CD8-positive, alpha-beta T cell (primary cell): ENCODE measurements at regions of chr17 and their contacts with region 1.

Region 1: GRCh38 chr17:75400326-75400939 is 5.0 kb downstream of the GRB2 start:
- DNase-seq: no peak
- ATAC-seq: no peak
- H3K4me3 ChIP-seq: no peak overlapping the region
- H3K4me3 Mint-ChIP-seq: no peak overlapping the region
- H3K27ac ChIP-seq: no peak overlapping the region
- H3K27ac Mint-ChIP-seq: no peak overlapping the region
- H3K4me1 ChIP-seq: peaks cover 48% of the 10 kb centered on the region
- H3K4me1 Mint-ChIP-seq: peaks cover 61% of the 10 kb centered on the region
- H3K27me3 ChIP-seq: no peaks in the 10 kb centered on the region
- H3K27me3 Mint-ChIP-seq: no peaks in the 10 kb centered on the region
- CTCF ChIP-seq: no peak

Region 2: GRCh38 chr17:75209061-75209460 is 191.4 kb before region 1 on chr17:
- CTCF ChIA-PET with region 1: no interaction called
- POLR2A ChIA-PET with region 1: no interaction called
- intact Hi-C with region 1: no loop called
- DNase-seq: no peak
- ATAC-seq: no peak
- H3K4me3 ChIP-seq: no peak overlapping the region
- H3K4me3 Mint-ChIP-seq: no peak overlapping the region
- H3K27ac ChIP-seq: no peak overlapping the region
- H3K27ac Mint-ChIP-seq: no peak overlapping the region
- H3K4me1 ChIP-seq: peaks cover 18% of the 10 kb centered on the region
- H3K4me1 Mint-ChIP-seq: peaks cover 19% of the 10 kb centered on the region
- H3K27me3 ChIP-seq: no peaks in the 10 kb centered on the region
- H3K27me3 Mint-ChIP-seq: no peaks in the 10 kb centered on the region
- CTCF ChIP-seq: no peak

Region 3: DNA sequence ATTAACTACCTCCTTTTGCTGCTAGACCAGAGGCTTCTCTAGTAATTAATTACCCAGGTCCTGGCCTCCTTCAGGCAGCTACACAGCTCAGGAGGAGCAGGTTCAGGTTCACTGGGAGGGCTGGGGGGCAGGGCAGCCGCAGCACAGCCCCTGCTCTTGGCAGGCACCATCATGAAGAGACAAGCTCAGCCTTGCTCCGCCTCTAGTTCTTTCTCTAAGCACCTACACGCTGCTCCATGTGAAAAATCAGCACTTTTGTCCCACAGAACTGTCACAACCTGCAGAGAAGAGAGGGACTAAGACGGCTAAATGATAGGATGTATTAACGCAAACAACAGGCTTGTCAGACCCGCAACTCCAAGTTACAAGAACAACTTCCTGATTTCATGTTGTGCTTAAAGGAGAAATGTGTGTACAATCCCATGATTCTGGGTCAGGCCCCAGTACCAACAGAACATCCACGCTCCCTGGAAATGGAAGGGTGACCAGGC is 48.3 kb before region 1 on chr17:
- CTCF ChIA-PET with region 1: no interaction called
- POLR2A ChIA-PET with region 1: interaction called, 3 read pairs
- intact Hi-C with region 1: loop called in 1 of 2 experiments (anchors 5 kb)
- DNase-seq: peak in 1 of 9 experiments; percentile 15
- ATAC-seq: no peak
- H3K4me3 ChIP-seq: no peak overlapping the region
- H3K4me3 Mint-ChIP-seq: no peak overlapping the region
- H3K27ac ChIP-seq: no peak overlapping the region
- H3K27ac Mint-ChIP-seq: peak overlapping the region; percentile 73
- H3K4me1 ChIP-seq: peaks cover 47% of the 10 kb centered on the region
- H3K4me1 Mint-ChIP-seq: peaks cover 73% of the 10 kb centered on the region
- H3K27me3 ChIP-seq: no peaks in the 10 kb centered on the region
- H3K27me3 Mint-ChIP-seq: no peaks in the 10 kb centered on the region
- CTCF ChIP-seq: no peak

Region 4: GRCh38 chr17:75442168-75443103 is 42.0 kb after region 1 on chr17:
- CTCF ChIA-PET with region 1: no interaction called
- POLR2A ChIA-PET with region 1: no interaction called
- intact Hi-C with region 1: no loop called
- DNase-seq: no peak
- ATAC-seq: no peak
- H3K4me3 ChIP-seq: no peak overlapping the region
- H3K4me3 Mint-ChIP-seq: no peak overlapping the region
- H3K27ac ChIP-seq: no peak overlapping the region
- H3K27ac Mint-ChIP-seq: no peak overlapping the region
- H3K4me1 ChIP-seq: no peaks in the 10 kb centered on the region
- H3K4me1 Mint-ChIP-seq: no peaks in the 10 kb centered on the region
- H3K27me3 ChIP-seq: no peaks in the 10 kb centered on the region
- H3K27me3 Mint-ChIP-seq: no peaks in the 10 kb centered on the region
- CTCF ChIP-seq: no peak